HEK293T (cell line): ENCODE measurements at regions of chr2 and their contacts with region 1.

Region 1: GRCh38 chr2:178450774-178451525 is at the starts of genes PJVK and PRKRA:
- DNase-seq: peak; percentile 96

Region 2: DNA sequence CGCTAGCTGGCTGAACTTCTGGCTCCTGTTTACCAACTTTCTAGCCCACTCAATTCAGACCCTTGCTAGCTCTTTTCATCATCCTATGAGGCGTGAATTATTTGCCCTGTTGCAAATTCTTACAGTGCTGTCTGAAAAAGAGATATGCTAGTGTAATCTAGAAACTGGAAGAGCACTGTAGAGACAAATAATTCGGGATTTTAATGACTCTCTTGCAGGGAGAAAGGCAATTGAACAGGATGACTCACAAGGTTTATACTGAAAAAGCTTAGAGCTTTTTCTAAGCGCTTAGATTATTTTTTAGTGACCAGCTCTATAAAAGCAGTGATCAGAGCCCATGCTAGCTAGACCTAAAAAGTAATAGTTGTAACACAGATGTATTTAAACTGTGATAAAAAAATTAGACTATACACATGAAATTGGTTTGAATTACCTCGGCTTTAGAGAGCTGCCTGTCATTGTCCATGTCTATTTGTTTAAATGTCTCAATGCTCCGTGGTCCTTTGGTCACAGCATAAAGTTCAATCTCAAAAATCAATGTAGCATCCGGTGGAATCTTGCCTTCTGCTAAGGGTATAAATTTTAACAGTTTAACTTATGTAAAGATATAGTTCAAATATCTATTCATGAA is 18.4 kb after region 1 on chr2:
- CTCF ChIA-PET with region 1: interaction called, 3 read pairs
- POLR2A ChIA-PET with region 1: interaction called, 17 read pairs
- DNase-seq: no peak

Region 3: DNA sequence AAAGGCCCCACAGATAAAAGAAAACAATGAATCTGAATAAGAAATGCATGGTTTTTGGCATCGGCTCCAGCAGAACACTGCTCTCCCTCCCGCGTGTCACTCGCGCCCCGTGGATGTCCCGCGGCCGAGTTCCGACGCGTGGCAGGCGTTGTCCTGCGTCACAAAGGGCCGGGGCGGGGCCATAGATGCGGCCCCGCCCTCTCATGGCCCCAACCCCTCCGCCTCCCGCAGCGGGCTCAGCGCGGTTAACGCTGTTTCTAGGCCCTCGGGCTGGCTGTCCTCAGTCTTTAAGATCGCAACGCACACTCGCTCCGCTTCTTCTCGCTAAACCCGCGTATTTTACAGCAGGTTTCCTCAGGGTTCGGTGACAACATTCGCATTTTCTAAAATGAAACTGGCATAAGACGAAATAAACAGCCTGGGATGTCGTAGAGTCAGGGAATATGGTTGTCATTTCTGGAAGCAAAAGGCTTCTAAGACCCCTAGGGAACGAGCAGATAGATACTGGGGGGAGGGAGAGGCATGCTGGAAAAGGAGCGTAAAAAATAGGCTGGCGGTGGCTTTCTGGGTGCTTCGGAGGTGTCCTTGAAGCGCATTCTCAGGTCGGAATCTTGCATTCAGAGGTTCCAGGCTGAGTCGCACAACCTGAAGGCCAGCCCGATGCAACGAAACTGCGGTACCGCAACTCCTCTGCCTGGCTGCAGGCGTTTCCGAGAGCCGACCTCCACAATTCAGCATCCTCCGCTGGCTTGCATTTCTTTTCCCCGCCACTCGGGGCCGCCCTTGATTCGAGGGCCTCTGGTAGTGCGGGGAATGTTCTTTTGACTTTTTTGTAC is 27.7 kb after region 1 on chr2 and contains the start of gene FKBP7:
- CTCF ChIA-PET with region 1: no interaction called
- POLR2A ChIA-PET with region 1: interaction called, 19 read pairs
- DNase-seq: peak; percentile 79

Region 4: GRCh38 chr2:178508646-178509045 is 57.7 kb after region 1 on chr2:
- CTCF ChIA-PET with region 1: no interaction called
- POLR2A ChIA-PET with region 1: no interaction called
- DNase-seq: no peak

Region 5: DNA sequence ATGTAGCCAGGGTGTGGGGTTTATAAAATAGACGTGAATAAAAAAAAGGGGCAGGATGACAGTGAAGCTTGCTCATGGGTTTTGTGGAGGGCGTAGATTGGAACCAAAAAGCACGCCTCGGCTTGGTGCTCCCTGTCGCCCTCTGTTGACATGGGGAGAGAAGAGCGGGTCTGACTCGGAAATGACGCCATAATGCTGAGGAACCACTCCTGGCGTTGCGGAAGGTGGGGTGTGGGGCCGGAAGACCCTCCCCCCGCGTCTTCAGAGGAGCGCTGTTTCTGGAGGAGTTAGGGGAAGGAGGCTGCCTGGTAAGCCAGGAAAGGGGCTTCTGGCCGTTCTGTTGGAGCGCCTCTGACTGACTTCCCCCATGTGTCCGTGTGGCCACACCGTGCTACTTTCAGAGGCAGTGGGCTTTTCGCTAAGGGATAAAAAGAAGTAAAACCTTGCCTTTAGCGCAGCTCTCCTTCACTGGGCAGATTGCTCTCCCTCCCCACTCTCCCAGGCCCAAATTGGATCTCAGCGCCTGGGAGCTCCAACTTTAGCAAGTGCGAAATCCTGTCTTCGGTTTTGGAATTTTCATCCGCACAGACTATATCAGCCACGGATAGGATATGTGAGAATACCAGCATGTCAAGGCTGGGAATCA is 72.1 kb after region 1 on chr2:
- CTCF ChIA-PET with region 1: no interaction called
- POLR2A ChIA-PET with region 1: interaction called, 12 read pairs
- DNase-seq: peak; percentile 93